Calu3 (cell line): ENCODE measurements at regions of chr3 and their contacts with region 1.

Region 1: DNA sequence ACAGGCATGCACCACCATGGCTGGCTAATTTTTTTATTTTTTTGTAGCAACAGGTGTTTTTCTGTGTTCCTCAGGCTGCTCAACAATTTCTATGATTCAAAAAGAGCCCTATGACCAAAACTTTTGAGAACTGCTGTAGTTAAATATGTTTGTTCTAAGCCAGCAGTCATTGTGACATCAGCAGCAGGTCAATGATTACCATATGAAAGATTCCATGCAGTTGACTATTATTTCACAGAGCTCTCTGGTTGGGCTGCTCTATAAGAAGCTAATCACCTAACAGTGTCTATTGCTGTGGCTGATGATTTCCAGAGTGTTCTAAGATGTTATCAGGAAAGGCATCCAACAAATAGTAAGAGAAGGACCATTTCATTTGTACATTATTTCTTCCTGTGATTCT is at the start of gene CCDC54:
- DNase-seq: peak; percentile 16
- H3K4me3 Mint-ChIP-seq: no peak within 1 kb of the TSS
- H3K27ac Mint-ChIP-seq: peak within 1 kb of the TSS; percentile 27
- H3K4me1 Mint-ChIP-seq: peaks cover 47% of the 10 kb centered on the region
- H3K27me3 Mint-ChIP-seq: no peaks in the 10 kb centered on the region
- CTCF ChIP-seq: no peak
- total RNA-seq, gene CCDC54: not detected in 2 replicates

Region 2: DNA sequence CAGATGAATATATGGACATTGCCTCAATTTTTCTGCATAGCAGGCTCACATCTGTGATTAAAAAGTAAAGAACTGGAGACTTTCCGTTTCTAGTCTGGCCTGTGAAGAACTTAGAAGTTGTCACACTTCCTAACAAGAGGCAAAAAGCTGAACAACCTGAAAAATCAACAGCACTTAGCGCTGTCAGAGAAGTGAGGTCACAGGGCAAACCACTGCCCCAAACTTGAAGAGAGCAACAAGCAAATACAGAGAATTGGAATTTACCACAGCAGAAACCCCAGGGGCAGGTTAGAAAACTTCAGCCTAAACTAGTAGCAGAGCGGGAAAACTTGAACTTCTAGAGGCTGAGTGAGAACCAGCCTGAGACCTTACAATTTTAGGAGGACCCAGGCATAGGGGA is 39.0 kb after region 1 on chr3:
- CTCF ChIA-PET with region 1: interaction called, 3 read pairs
- intact Hi-C with region 1: loop called (anchors 2 kb)
- DNase-seq: peak; percentile 22
- H3K4me3 Mint-ChIP-seq: no peak overlapping the region
- H3K27ac Mint-ChIP-seq: no peak overlapping the region
- H3K4me1 Mint-ChIP-seq: peaks cover 23% of the 10 kb centered on the region
- H3K27me3 Mint-ChIP-seq: no peaks in the 10 kb centered on the region
- CTCF ChIP-seq: no peak